ENCODE measurements at regions of chrX and their contacts with region 1.

Region 1: DNA sequence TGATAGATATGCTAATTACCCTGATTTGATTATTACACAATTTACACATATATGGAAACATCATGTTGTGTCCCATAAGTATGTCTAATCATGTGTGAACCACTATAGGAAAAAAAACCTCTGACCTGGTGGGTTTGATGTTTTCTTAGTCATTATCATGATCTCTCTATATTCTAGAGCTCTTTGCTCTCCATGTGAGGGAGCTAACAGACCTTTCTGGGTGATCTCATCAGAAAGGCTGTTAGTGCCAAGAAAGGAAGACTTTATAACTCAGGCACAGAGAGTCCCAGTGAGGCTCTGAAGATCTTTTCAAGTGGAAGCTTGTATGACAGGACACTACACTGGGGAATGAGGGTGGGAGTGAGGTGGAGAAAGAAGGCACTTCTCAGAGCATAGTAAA is 527.7 kb upstream of the MAGEB2 start:
- DNase-seq: peak; percentile 47
- ATAC-seq: peak; percentile 83
- H3K4me3 ChIP-seq: no peak overlapping the region
- H3K27ac ChIP-seq: no peak overlapping the region
- H3K4me1 ChIP-seq: no peaks in the 10 kb centered on the region; the same call in 1 of the 2 replicates
- H3K27me3 ChIP-seq: no peaks in the 10 kb centered on the region
- CTCF ChIP-seq: no peak; the same call in 1 of the 2 replicates

Region 2: GRCh38 chrX:29903360-29903759 is 215.7 kb after region 1 on chrX:
- CTCF ChIA-PET with region 1: interaction called, 10 read pairs
- POLR2A ChIA-PET with region 1: no interaction called
- intact Hi-C with region 1: loop called (anchors 1 kb)
- DNase-seq: peak; percentile 23
- ATAC-seq: 0 out of 2 replicates have a peak, but pooled peaks have one; percentile 50
- H3K4me3 ChIP-seq: no peak overlapping the region
- H3K27ac ChIP-seq: no peak overlapping the region
- H3K4me1 ChIP-seq: no peaks in the 10 kb centered on the region
- H3K27me3 ChIP-seq: no peaks in the 10 kb centered on the region
- CTCF ChIP-seq: peak; percentile 65

Region 3: GRCh38 chrX:30060718-30061117 is 373.0 kb after region 1 on chrX:
- CTCF ChIA-PET with region 1: no interaction called
- POLR2A ChIA-PET with region 1: no interaction called
- intact Hi-C with region 1: loop called (anchors 1 kb)
- DNase-seq: peak; percentile 47
- ATAC-seq: peak; percentile 74
- H3K4me3 ChIP-seq: no peak overlapping the region
- H3K27ac ChIP-seq: no peak overlapping the region
- H3K4me1 ChIP-seq: no peaks in the 10 kb centered on the region
- H3K27me3 ChIP-seq: no peaks in the 10 kb centered on the region
- CTCF ChIP-seq: peak; percentile 67

Measured in PC-3 (cell line).